ENCODE measurements at regions of chr1 and their contacts with region 1.

Region 1: DNA sequence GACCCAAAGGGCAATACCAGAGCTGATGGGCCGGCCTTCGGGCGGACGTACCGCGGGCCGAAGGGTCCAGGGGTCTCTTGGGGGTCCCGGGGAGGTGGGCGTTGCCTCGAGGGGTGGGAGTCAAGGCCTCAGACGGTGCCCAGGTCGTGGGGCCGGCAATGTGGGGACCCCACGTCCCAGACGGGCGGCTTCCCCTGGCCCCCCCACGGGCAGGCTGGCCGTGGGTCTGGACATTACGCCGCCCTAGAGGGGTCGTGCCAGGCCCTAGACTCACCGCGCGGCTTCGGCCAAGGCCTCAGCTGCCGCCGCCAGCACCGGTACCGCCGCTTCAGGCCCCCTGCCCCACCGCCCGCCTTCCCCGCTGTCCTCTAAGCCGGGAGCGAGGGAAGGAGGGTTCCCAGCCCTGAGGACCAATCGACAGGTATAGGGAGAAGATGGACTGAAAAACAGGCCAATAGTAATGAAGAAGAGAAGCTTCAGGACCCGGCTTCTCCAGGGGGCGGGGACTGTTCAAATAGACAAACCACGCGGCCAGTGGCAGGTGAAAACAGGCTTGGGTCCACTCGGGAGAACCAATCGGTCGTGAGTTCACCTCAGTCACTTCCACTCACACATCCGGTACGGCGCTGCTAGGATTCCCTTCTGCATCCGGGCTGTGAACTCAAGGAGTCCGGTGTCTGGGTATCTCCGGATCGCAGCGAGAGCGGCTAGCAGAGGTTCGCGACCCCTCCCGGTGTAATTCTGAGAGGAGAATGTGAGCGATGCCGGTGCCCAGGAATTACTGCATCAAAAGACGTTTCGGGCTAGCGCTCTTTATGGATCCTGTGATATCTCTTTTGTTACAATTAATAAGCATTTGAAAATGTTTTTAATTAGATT is at the start of gene MTOR:
- DNase-seq: peak; percentile 80
- ATAC-seq: peak; percentile 98
- H3K4me3 Mint-ChIP-seq: peak within 1 kb of the TSS; percentile 89
- H3K27ac Mint-ChIP-seq: peak within 1 kb of the TSS; percentile 87
- H3K4me1 Mint-ChIP-seq: peaks cover 16% of the 10 kb centered on the region
- H3K27me3 Mint-ChIP-seq: no peaks in the 10 kb centered on the region
- CTCF ChIP-seq: no peak
- total RNA-seq, gene MTOR: 49.9 and 55.1 TPM in 2 replicates

Region 2: GRCh38 chr1:11037740-11038182 is 224.6 kb before region 1 on chr1:
- CTCF ChIA-PET with region 1: no interaction called
- POLR2A ChIA-PET with region 1: interaction called, 17 read pairs
- intact Hi-C with region 1: no loop called
- DNase-seq: peak; percentile 72
- ATAC-seq: peak; percentile 96
- H3K4me3 Mint-ChIP-seq: no peak overlapping the region
- H3K27ac Mint-ChIP-seq: no peak overlapping the region
- H3K4me1 Mint-ChIP-seq: peaks cover 4% of the 10 kb centered on the region
- H3K27me3 Mint-ChIP-seq: peaks cover 6% of the 10 kb centered on the region
- CTCF ChIP-seq: peak; percentile 57

Region 3: GRCh38 chr1:11099310-11100149 is 162.9 kb before region 1 on chr1 and contains the start of gene EXOSC10:
- CTCF ChIA-PET with region 1: no interaction called
- POLR2A ChIA-PET with region 1: interaction called, 4 read pairs
- intact Hi-C with region 1: loop called (anchors 1 kb)
- DNase-seq: peak; percentile 94
- ATAC-seq: peak; percentile 97
- H3K4me3 Mint-ChIP-seq: peak within 1 kb of the TSS; percentile 95
- H3K27ac Mint-ChIP-seq: peak within 1 kb of the TSS; percentile 93
- H3K4me1 Mint-ChIP-seq: peaks cover 15% of the 10 kb centered on the region
- H3K27me3 Mint-ChIP-seq: no peaks in the 10 kb centered on the region
- CTCF ChIP-seq: no peak
- total RNA-seq, gene EXOSC10: 89.3 and 108 TPM in 2 replicates

Region 4: GRCh38 chr1:11214698-11215380 is 47.6 kb before region 1 on chr1:
- CTCF ChIA-PET with region 1: no interaction called
- POLR2A ChIA-PET with region 1: no interaction called
- intact Hi-C with region 1: no loop called
- DNase-seq: no peak
- ATAC-seq: no peak
- H3K4me3 Mint-ChIP-seq: no peak overlapping the region
- H3K27ac Mint-ChIP-seq: no peak overlapping the region
- H3K4me1 Mint-ChIP-seq: no peaks in the 10 kb centered on the region
- H3K27me3 Mint-ChIP-seq: no peaks in the 10 kb centered on the region
- CTCF ChIP-seq: no peak

Region 5: GRCh38 chr1:11227106-11228077 is 35.0 kb before region 1 on chr1:
- CTCF ChIA-PET with region 1: no interaction called
- POLR2A ChIA-PET with region 1: interaction called, 8 read pairs
- intact Hi-C with region 1: loop called (anchors 5 kb)
- DNase-seq: no peak
- ATAC-seq: peak; percentile 75
- H3K4me3 Mint-ChIP-seq: peak overlapping the region; percentile 64
- H3K27ac Mint-ChIP-seq: peak overlapping the region; percentile 86
- H3K4me1 Mint-ChIP-seq: peaks cover 57% of the 10 kb centered on the region
- H3K27me3 Mint-ChIP-seq: no peaks in the 10 kb centered on the region
- CTCF ChIP-seq: no peak

Region 6: DNA sequence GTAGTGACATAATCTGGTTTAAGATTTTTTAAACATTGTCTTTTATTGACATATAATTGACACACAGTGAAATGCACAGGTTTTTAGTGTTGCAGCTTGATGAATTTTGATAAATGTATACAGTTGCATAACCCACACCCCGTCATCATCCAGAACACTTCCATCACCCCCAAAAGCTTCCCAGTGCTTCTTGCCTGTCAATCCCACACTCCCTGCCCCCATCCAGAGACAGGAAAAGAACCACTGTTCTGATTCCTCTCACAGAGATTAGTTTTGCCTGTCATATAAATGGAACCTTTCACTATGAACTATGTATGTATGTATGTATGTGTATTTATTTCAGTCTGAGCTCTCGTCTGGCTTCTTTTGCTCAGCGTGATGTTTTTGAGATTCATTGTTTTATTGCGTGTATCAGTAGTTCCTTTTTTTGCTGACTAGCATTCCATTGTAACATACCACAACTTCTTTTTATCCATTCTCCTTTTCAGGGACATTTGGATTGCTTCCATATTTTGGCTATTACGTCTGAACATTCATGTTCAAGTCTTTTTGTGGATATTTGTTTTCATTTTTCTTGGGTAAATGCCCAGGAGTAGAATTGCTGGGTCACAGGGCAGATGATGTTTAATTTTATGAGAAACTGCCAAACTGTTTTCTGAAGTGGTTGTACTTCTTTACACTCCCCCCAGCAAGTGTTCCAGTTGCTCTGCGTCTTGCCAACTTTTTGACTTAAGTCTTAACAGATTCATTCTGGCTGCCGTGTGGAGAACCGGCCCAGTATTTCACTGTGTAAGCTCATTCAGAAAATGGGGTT is 19.3 kb after region 1 on chr1:
- CTCF ChIA-PET with region 1: no interaction called
- POLR2A ChIA-PET with region 1: interaction called, 21 read pairs
- intact Hi-C with region 1: loop called (anchors 2 kb)
- DNase-seq: no peak
- ATAC-seq: no peak
- H3K4me3 Mint-ChIP-seq: peak overlapping the region; percentile 61
- H3K27ac Mint-ChIP-seq: peak overlapping the region; percentile 87
- H3K4me1 Mint-ChIP-seq: peaks cover 60% of the 10 kb centered on the region
- H3K27me3 Mint-ChIP-seq: no peaks in the 10 kb centered on the region
- CTCF ChIP-seq: no peak